Cardiac septum (tissue), 1 donor: ENCODE measurements at regions of chr3 and their contacts with region 1.

Region 1: GRCh38 chr3:188286087-188286513 is 132.1 kb downstream of the LPP start:
- DNase-seq: peak; percentile 80

Region 2: GRCh38 chr3:188584162-188584529 is 298.0 kb after region 1 on chr3:
- intact Hi-C with region 1: loop called (anchors 5 kb)
- DNase-seq: no peak